Pancreas (tissue), 10 donors: ENCODE measurements at regions of chr5 and their contacts with region 1.

Region 1: GRCh38 chr5:72507909-72508575 is 832 bp upstream of the ZNF366 start:
- DNase-seq: no peak
- ATAC-seq: peak in 1 of 4 donors; percentile 47
- H3K4me3 ChIP-seq: no peak overlapping the region
- H3K27ac ChIP-seq: no peak overlapping the region
- H3K4me1 ChIP-seq: no peaks in the 10 kb centered on the region
- H3K27me3 ChIP-seq: no peaks in the 10 kb centered on the region
- CTCF ChIP-seq: no peak

Region 2: DNA sequence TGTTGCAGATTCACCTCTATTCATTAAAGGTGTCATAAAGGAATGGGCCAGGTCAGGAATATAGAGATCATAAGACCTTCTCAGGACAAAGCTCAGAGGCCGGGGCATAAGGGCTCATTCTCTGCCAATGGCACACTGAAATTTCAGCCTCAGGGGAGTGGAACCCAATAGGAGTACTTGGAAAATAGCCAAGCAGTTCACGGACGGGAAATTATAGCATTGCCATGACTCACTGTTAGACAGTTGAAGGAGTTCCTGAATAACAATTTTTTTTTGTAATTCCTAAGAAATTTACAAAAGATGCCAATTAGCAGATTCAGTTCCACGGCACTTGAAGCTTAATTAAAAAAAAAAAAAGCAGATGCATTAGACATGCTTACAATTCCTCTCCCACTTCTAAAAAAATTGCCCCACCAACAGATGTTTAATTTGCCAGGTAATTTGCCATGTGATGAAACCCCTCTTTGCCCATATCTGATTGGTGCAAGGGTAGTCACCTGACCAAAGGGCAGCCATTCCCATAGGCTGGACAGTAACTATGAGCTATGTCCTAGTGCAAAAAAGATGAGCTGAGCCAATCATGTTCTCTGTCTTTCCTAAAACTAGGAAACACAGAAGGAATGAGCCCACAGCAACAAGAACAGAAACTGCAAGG is 129.3 kb before region 1 on chr5:
- intact Hi-C with region 1: loop called in 1 of 3 experiments (anchors 10 kb)
- DNase-seq: no peak
- ATAC-seq: peak in 1 of 4 donors; percentile 77
- H3K4me3 ChIP-seq: no peak overlapping the region
- H3K27ac ChIP-seq: no peak overlapping the region
- H3K4me1 ChIP-seq: no peaks in the 10 kb centered on the region
- H3K27me3 ChIP-seq: no peaks in the 10 kb centered on the region
- CTCF ChIP-seq: no peak